Heart left ventricle (tissue), 16 donors: ENCODE measurements at regions of chr6 and their contacts with region 1.

Region 1: GRCh38 chr6:144119376-144119775 is 24.0 kb upstream of the SF3B5 start:
- DNase-seq: no peak
- ATAC-seq: no peak
- H3K4me3 ChIP-seq: no peak overlapping the region
- H3K27ac ChIP-seq: no peak overlapping the region
- H3K4me1 ChIP-seq: peaks cover 0 to 14% (median 0%) of the 10 kb centered on the region in 12 donors
- H3K27me3 ChIP-seq: no peaks in the 10 kb centered on the region
- CTCF ChIP-seq: no peak
- POLR2A ChIP-seq: no peak

Region 2: DNA sequence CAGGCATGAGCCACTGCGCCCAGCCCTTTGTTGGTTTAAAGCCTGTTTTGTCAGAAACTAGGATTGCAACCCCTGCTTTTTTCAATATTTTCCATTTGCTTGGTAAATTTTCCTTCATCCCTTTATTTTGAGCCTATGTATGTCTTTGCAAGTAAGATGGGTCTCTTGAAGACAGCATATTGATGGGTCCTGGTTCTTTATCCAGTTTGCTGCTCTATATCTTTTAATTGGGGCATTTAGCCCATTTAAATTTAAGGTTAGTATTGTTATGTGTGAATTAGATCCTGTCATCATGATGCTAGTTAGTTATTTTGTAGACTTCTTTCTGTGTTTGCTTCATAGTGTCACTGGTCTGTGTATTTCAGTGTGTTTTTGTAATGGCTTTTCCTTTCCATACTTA is 208.3 kb before region 1 on chr6:
- intact Hi-C with region 1: no loop called
- DNase-seq: no peak
- ATAC-seq: no peak
- H3K4me3 ChIP-seq: no peak overlapping the region
- H3K27ac ChIP-seq: no peak overlapping the region
- H3K4me1 ChIP-seq: no peaks in the 10 kb centered on the region
- H3K27me3 ChIP-seq: no peaks in the 10 kb centered on the region
- CTCF ChIP-seq: no peak
- POLR2A ChIP-seq: no peak

Region 3: DNA sequence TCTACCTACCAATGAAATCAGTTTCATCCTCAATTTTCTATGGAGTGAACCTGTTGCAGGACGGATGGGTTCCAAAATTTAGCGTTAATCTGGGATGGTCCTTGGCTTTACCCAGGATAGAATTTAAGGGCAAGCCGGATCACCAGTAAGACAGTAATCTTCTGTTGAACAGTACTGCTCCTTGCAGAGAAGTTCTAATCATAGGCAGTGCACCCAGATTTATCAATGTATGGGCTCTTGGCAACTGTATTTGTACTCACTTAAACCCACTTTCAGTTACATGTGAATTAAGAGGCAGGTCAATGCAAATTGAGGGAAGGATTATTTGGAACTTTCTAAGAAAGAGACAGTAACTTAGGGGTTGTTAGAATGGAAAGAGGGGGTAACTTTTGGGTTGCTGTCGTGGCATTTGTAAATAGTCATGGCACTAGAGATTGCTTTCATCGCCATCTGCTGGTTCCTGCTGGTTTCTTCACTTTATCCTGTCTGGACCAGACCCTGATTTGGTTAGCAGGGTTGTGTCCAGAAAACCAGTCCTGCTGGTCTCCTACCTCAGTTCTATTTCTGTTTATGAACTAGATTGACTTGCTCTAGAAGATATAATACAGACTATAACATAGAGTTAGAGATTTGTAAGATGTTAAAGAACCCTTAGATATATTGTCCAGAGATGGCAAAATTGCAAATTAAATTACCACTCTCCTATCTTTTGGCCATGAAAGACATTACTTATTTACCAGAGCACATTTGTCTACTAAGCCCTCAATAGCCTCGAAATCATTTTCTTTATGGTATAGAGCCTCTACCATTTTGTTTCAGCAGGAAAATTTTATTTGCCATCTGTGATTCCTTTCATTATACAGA is 812.0 kb after region 1 on chr6:
- intact Hi-C with region 1: loop called in 1 of 10 experiments (anchors 10 kb)
- DNase-seq: peak in 1 of 5 donors; percentile 8
- ATAC-seq: no peak
- H3K4me3 ChIP-seq: no peak overlapping the region
- H3K27ac ChIP-seq: no peak overlapping the region
- H3K4me1 ChIP-seq: no peaks in the 10 kb centered on the region
- H3K27me3 ChIP-seq: no peaks in the 10 kb centered on the region
- CTCF ChIP-seq: peak in 11 of 12 donors; percentile 30 to 65 (median 47)
- POLR2A ChIP-seq: no peak